Posterior vena cava (tissue), 2 donors: ENCODE measurements at regions of chr19 and their contacts with region 1.

Region 1: GRCh38 chr19:12669270-12670158 is 2.9 kb downstream of the WDR83 start:
- DNase-seq: peak; percentile 93

Region 2: GRCh38 chr19:12564016-12564664 is 105.4 kb before region 1 on chr19:
- intact Hi-C with region 1: loop called in 1 of 2 experiments (anchors 5 kb)
- DNase-seq: peak; percentile 97

Region 3: DNA sequence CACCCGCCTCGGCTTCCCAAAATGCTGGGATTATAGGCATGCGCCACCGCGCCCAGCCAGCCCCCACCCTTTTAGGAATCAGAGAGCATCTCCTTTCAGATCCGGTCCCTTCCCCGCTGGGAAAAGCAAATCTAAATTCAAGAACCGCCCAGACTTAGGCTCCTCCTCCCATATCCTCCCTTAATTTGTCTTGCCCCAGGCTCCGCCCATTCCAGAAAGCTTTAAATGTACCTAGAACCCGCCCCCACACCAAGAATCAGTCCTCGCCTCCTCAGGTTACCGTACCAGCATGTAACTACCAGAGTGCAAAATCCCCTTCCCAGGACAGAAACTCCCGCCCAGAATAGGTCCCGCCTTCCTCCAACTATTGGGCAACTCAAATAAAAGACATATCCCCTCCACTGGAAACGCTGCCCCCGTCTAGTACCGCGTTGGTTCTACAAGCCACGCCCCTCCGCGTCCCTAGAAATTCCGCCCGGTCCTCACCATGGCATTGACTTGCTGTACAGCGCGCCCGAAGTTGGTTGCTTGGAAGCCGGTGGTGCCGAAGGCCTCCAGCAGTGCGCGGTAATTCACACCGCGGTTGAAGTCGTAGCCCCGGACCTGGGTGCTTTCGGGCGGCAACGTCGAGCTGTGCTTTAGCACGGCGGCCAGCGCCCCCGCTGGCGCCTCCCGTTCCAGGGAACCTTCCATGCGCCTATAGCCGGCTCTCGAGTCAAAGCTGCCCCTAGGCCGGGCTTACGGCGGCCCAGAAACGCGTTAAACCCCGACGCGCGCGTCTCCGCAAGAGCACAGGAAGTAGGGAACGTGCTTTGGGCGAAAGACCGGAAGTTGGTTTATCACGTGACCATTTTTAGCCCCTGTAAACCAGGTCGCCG is 11.8 kb after region 1 on chr19 and contains the start of gene DHPS:
- intact Hi-C with region 1: no loop called
- DNase-seq: peak; percentile 97
- total RNA-seq, gene DHPS: 47.2 to 52.6 TPM

Region 4: GRCh38 chr19:12722566-12723380 is 53.3 kb after region 1 on chr19:
- intact Hi-C with region 1: no loop called
- DNase-seq: peak; percentile 98